OCI-LY7 (cell line): ENCODE measurements at regions of chr4 and their contacts with region 1.

Region 1: GRCh38 chr4:125741825-125742452 is 427.2 kb downstream of the FAT4 start:
- DNase-seq: peak; percentile 7
- H3K4me3 ChIP-seq: no peak overlapping the region
- H3K27ac ChIP-seq: no peak overlapping the region
- H3K4me1 ChIP-seq: no peaks in the 10 kb centered on the region
- CTCF ChIP-seq: peak; percentile 77

Region 2: GRCh38 chr4:125314676-125315575 is 427.0 kb before region 1 on chr4 and contains the start of gene FAT4:
- CTCF ChIA-PET with region 1: no interaction called
- POLR2A ChIA-PET with region 1: interaction called, 4 read pairs
- intact Hi-C with region 1: loop called (anchors 5 kb)
- DNase-seq: no peak
- H3K4me3 ChIP-seq: no peak within 1 kb of the TSS
- H3K27ac ChIP-seq: no peak within 1 kb of the TSS
- H3K4me1 ChIP-seq: no peaks in the 10 kb centered on the region
- CTCF ChIP-seq: no peak
- total RNA-seq, gene FAT4: not detected in 2 replicates